Heart right ventricle (tissue), 16 donors: ENCODE measurements at regions of chr5 and their contacts with region 1.

Region 1: GRCh38 chr5:143314659-143315058 is 88.8 kb downstream of the NR3C1 start:
- DNase-seq: no peak
- ATAC-seq: peak in 4 of 8 donors; percentile 24 to 74 (median 52)
- H3K4me3 ChIP-seq: no peak overlapping the region
- H3K27ac ChIP-seq: peak overlapping the region in 2 of 10 donors; percentile 2 to 42
- H3K4me1 ChIP-seq: peaks cover 11 to 90% (median 69%) of the 10 kb centered on the region in 9 donors
- H3K27me3 ChIP-seq: no peaks in the 10 kb centered on the region
- CTCF ChIP-seq: no peak

Region 2: GRCh38 chr5:143229896-143230675 is 84.6 kb before region 1 on chr5:
- intact Hi-C with region 1: loop called in 1 of 10 experiments (anchors 5 kb)
- DNase-seq: no peak
- ATAC-seq: peak in 7 of 8 donors; percentile 62 to 88 (median 78)
- H3K4me3 ChIP-seq: no peak overlapping the region
- H3K27ac ChIP-seq: peak overlapping the region in 1 of 10 donors; percentile 60
- H3K4me1 ChIP-seq: peaks cover 0 to 32% (median 16%) of the 10 kb centered on the region in 9 donors
- H3K27me3 ChIP-seq: no peaks in the 10 kb centered on the region
- CTCF ChIP-seq: no peak